ENCODE measurements at regions of chr4 and their contacts with region 1.

Region 1: GRCh38 chr4:140153718-140154571 is at the start of gene MAML3:
- DNase-seq: peak; percentile 92 to 98
- H3K4me3 ChIP-seq: peak within 1 kb of the TSS; percentile 77
- CTCF ChIP-seq: no peak
- POLR2A ChIP-seq: no peak
- total RNA-seq, gene MAML3: 21.2 to 28.4 (median 22.1) TPM

Region 2: DNA sequence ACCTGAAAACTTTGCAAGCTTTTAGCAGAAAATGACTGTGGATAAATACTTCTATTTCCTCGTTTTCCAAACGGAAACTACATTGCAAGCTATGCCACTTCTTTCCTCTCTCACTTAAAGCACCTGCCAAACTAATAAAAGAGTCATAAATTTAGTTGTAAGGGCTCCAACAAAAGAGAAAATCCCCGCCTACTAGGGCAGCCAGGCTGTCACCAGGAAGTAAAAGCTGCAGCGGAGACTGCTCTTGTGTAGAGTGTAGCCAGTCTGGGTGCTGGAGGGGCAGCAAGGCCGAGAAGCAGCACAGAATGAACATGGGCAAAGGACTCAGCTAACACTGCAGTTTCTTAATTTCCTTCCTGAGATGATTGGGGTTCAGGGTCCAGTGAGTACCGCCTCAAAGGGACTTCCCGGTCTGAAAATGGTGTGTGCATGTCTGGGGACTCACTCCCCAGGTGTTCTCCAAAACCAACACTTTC is 89.4 kb after region 1 on chr4:
- intact Hi-C with region 1: loop called (anchors 10 kb)
- DNase-seq: no peak
- H3K4me3 ChIP-seq: no peak overlapping the region
- CTCF ChIP-seq: no peak
- POLR2A ChIP-seq: no peak